Ascending aorta (tissue), 2 donors: ENCODE measurements at regions of chr2 and their contacts with region 1.

Region 1: DNA sequence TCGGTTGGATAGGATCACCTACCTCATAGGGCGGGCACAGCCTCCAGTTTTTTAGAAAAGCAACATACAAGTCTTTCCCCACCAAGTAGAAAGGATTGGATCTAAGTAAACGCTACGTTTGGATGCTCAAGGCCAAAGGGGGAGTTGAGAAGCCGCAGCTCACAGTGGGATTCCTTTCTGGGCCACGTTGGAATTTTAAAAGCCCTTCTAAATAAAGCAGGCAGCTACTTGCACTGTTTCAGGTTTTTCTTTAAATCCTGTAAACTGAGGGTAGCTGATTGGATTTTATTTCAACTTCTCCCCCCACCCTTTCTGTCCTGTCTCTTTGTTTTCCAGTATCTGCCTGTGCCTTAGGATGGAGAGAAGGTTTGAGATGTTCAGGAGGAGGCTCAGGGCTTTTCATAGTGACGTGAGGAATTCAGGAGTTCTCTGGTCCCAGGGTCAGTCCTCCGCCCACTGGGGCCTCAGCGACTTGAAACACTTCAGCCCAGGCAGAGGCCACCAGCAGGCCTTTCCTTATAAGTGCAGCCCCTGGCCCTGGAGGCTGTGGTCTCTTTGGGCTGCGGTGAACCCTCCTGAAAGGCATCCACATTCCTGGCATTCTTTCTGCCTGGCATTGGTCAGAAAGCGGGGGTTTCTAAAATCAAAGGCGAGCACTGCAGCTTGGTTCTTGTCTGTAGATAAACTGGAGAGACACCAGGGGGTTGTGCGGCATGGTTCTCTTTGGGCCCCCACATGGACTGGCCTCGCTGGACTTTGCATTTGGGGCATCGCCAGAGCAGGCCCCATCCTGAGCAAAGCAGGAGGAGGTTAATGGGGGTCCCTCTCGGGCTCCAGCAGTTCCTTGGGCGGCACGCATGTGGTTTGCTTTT is 44.5 kb downstream of the SH3BP4 start:
- DNase-seq: peak in 1 of 2 donors; percentile 66
- H3K4me3 ChIP-seq: no peak overlapping the region
- H3K27ac ChIP-seq: peak overlapping the region; percentile 5 to 45
- H3K4me1 ChIP-seq: peaks cover 3 to 38% of the 10 kb centered on the region in 2 donors
- H3K27me3 ChIP-seq: no peaks in the 10 kb centered on the region
- CTCF ChIP-seq: peak in 1 of 3 experiments; percentile 11

Region 2: GRCh38 chr2:234814374-234814773 is 181.9 kb before region 1 on chr2:
- intact Hi-C with region 1: no loop called
- DNase-seq: no peak
- H3K4me3 ChIP-seq: no peak overlapping the region
- H3K27ac ChIP-seq: no peak overlapping the region
- H3K4me1 ChIP-seq: no peaks in the 10 kb centered on the region
- H3K27me3 ChIP-seq: no peaks in the 10 kb centered on the region
- CTCF ChIP-seq: no peak

Region 3: GRCh38 chr2:234881413-234882241 is 114.7 kb before region 1 on chr2:
- intact Hi-C with region 1: loop called (anchors 10 kb)
- DNase-seq: peak; percentile 32 to 87
- H3K4me3 ChIP-seq: peak overlapping the region in 1 of 2 donors; percentile 42
- H3K27ac ChIP-seq: no peak overlapping the region
- H3K4me1 ChIP-seq: peaks cover 0 to 9% of the 10 kb centered on the region in 2 donors
- H3K27me3 ChIP-seq: no peaks in the 10 kb centered on the region
- CTCF ChIP-seq: peak; percentile 51 to 73 (median 68)

Region 4: DNA sequence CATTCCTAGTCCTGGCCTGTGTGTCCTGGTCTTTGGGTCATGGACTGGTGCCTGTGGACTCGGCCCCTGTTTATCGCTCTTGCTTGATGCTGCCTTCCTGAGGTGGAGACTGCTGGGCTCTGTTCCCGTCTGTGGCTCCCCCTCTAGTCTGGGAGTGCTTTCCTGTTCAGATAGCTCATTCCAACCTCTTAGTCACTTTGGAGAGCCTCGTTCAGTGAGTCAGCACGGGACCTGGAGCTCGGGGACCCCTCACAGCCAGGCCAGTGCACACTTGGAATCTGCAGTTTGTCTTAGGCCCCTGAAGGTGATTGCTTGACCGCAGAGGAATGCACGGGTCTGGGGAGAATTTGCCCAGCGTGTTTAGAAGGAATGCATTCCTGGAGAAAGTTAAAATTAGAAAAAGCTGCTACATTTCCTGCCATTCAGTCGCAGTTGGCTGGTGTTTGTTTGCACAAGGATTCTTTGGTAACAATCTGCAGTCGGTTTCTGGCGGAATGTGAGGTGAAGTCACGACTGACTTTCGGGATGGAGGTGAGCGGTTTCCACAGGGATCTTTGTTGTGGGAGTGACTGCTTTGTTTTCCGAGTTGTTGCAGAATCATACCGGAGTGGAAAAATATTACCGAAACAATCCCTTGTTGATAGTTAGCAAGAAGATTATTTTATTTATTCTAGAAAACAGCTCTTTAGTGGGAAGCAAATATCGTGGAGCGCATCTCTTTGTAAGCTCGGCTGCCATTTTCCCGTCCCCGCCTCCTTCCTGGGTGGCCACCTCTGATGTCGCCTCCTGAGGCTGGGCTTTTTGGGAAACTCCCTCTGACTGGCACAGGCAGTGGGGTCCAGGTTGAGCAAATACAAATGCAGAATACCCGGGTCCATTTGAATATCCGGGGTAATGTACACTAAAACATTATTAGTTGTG is 14.8 kb before region 1 on chr2:
- intact Hi-C with region 1: no loop called
- DNase-seq: peak; percentile 35 to 94
- H3K4me3 ChIP-seq: peak overlapping the region; percentile 12 to 19
- H3K27ac ChIP-seq: peak overlapping the region; percentile 57 to 90
- H3K4me1 ChIP-seq: peaks cover 9 to 42% of the 10 kb centered on the region in 2 donors
- H3K27me3 ChIP-seq: no peaks in the 10 kb centered on the region
- CTCF ChIP-seq: peak in 1 of 3 experiments; percentile 7